Activated naive CD4-positive, alpha-beta T cell treated with anti-CD3 and anti-CD28 coated beads for 36 hours (primary cell): ENCODE measurements at regions of chr4 and their contacts with region 1.

Region 1: GRCh38 chr4:11505221-11505971 is 76.7 kb upstream of the HS3ST1 start:
- DNase-seq: peak; percentile 62
- H3K4me3 Mint-ChIP-seq: no peak overlapping the region
- H3K27ac Mint-ChIP-seq: no peak overlapping the region
- H3K4me1 Mint-ChIP-seq: peaks cover 24% of the 10 kb centered on the region
- H3K27me3 Mint-ChIP-seq: no peaks in the 10 kb centered on the region

Region 2: DNA sequence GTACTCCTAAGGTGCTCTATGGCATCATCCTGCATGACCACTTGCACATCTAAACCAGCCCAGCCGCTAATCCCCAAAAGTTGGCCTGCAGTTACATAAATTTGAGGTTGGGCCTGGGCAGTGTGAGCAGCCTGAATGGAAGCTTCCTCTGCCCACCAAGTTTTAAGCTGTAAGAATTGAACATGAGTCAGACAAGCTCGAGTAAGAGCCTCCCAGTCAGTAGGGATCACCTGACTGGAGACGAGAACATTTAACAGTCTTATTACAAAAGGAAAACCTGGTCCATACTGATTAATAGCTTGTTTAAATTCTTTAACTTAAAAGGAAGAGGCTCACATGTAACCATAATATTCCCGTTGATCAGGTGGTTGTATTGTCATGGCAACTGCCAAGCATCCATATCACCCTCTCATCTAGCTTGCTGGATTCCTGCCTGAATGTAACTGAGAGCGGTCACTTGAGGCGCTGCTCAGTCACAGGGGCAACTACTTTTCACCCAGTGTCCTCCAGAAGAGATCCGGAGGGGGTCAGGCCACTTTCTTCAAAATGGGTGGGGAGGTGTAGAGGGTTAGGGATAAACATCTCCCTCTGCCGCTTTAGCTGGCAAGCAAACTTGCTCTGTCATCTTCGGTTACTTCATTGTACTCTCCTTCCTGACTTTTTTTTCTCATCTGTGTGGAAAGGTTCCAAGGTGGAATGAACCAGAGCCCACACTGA is 1332.2 kb before region 1 on chr4:
- CTCF ChIA-PET with region 1: no interaction called
- intact Hi-C with region 1: no loop called
- DNase-seq: no peak
- H3K4me3 Mint-ChIP-seq: no peak overlapping the region
- H3K27ac Mint-ChIP-seq: no peak overlapping the region
- H3K4me1 Mint-ChIP-seq: no peaks in the 10 kb centered on the region
- H3K27me3 Mint-ChIP-seq: no peaks in the 10 kb centered on the region

Region 3: GRCh38 chr4:11487876-11488544 is 17.4 kb before region 1 on chr4:
- CTCF ChIA-PET with region 1: interaction called, 3 read pairs
- intact Hi-C with region 1: loop called (anchors 1 kb)
- DNase-seq: no peak
- H3K4me3 Mint-ChIP-seq: no peak overlapping the region
- H3K27ac Mint-ChIP-seq: no peak overlapping the region
- H3K4me1 Mint-ChIP-seq: peaks cover 31% of the 10 kb centered on the region
- H3K27me3 Mint-ChIP-seq: no peaks in the 10 kb centered on the region

Region 4: DNA sequence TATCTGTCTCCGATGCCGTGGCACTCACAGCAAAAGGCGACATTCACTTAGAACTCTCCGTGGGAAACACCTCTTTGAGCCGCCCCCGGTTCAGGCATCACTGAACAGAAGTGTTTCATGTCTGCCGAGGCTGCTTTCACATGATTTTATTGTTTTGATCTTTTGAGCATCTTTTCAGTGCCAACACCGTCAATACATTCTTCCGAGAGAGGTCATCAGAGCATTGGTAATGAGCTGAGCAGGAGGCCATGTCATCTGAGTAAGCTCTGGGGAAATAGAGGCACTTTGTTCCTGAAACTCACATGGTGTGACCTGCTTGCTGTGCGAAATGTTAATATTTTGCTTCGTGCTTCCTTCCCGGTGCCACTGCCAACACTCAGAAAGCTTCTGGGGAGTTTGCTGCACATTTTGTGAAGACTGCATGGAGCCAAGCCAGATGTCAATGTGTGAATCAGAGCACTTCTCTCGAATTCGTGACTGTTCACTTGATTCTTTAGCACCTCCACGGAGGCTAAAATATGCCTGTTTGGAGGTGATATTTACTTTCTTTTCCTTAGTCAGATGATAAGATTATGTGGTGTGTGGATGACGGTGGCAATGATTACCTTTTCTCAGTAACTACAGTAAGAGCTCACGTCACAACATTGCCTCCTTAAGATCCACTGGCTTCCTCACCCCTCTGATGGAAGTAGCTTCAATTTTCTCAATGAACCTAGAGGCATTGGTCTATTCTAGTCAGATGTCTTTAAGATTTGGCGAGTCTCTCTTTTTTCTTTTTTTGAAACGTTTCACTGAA is 145.6 kb after region 1 on chr4:
- CTCF ChIA-PET with region 1: no interaction called
- intact Hi-C with region 1: no loop called
- DNase-seq: no peak
- H3K4me3 Mint-ChIP-seq: no peak overlapping the region
- H3K27ac Mint-ChIP-seq: no peak overlapping the region
- H3K4me1 Mint-ChIP-seq: no peaks in the 10 kb centered on the region
- H3K27me3 Mint-ChIP-seq: peaks cover 27% of the 10 kb centered on the region